PC-9 (cell line): ENCODE measurements at regions of chr11 and their contacts with region 1.

Region 1: GRCh38 chr11:46489661-46490560 is 98.3 kb upstream of the CHRM4 start:
- DNase-seq: peak in 1 of 2 experiments; percentile 23
- H3K4me3 ChIP-seq: no peak overlapping the region
- H3K27ac ChIP-seq: no peak overlapping the region
- H3K4me1 ChIP-seq: no peaks in the 10 kb centered on the region
- H3K27me3 ChIP-seq: no peaks in the 10 kb centered on the region
- CTCF ChIP-seq: peak; percentile 71

Region 2: GRCh38 chr11:45603946-45604682 is 885.8 kb before region 1 on chr11:
- CTCF ChIA-PET with region 1: interaction called, 17 read pairs
- POLR2A ChIA-PET with region 1: no interaction called
- intact Hi-C with region 1: no loop called
- DNase-seq: no peak
- H3K4me3 ChIP-seq: no peak overlapping the region
- H3K27ac ChIP-seq: no peak overlapping the region
- H3K4me1 ChIP-seq: no peaks in the 10 kb centered on the region
- H3K27me3 ChIP-seq: peaks cover 72% of the 10 kb centered on the region
- CTCF ChIP-seq: no peak

Region 3: DNA sequence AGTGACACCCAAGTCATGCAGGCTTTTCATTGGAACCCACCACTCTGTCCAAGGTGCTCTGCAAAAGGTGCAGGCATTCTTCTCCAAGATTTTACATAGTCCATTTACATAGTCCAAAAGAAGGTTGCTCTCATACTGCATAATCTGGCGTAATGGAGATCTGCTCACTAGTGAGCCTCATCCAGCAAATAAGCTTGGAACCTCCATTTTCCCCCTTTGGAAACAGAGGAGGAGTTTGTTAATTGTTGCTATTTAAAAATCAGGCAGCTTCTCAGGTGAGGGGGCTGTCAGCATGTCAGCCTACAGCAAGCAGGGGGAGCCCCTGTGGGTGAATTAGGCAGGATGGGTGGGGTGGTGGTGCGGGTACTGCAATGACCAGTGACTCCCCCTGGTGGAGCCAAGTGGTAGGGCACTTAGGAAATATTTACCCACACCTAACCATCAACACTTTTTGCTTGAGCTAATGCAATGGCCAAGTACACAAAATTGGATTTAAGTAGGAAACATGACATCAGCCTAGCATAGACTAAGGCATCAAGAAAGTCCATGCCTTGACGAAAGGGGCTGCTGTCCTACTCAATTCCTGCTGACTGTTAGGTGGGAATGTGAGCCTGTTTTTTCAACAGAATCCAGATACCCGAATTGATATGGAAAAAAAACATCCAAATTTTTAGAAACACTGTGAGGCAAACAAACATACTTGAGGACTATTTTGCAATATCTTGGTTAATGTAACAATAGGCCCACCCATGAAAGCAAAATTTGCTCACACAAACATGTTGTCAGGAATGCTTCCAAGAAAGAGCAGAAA is 39.4 kb after region 1 on chr11:
- CTCF ChIA-PET with region 1: interaction called, 9 read pairs
- POLR2A ChIA-PET with region 1: interaction called, 3 read pairs
- intact Hi-C with region 1: loop called (anchors 2 kb)
- DNase-seq: peak; percentile 43 to 63
- H3K4me3 ChIP-seq: no peak overlapping the region
- H3K27ac ChIP-seq: no peak overlapping the region
- H3K4me1 ChIP-seq: no peaks in the 10 kb centered on the region
- H3K27me3 ChIP-seq: no peaks in the 10 kb centered on the region
- CTCF ChIP-seq: peak; percentile 97

Region 4: DNA sequence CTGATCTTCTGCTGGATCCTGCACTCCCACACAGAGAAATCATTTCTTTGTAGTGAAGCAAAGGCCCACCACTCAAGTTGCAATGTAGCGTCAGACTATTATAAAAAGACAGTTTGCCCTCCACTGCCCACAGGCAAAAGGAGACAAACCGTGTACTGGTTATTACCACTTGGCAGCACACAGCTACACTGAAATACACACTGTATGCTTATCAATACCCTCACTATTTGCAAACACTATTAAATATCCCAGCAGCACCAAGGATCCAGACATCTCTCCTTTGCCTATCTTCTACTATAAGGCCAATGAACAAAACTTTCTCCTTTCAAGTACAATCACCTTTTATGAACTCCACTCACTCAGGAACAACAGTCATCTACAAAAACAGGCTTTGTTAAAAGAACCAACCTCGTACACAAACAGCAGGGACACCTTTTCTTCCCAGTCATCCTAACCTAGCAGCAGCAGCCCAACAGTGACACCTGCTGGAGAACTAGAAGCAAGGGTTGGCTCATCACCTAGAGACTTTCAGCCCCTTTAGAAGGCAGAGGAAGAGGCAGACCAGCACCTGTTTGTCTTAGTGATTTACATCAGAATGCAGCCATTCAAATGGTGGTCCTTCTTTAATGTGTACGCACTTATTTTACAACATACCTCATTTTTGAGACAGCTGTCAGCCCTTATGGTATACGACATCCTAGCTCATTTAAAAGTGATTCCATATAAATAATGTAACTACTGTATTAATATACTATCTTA is 47.8 kb after region 1 on chr11:
- CTCF ChIA-PET with region 1: no interaction called
- POLR2A ChIA-PET with region 1: interaction called, 3 read pairs
- intact Hi-C with region 1: loop called (anchors 1 kb)
- DNase-seq: peak; percentile 66 to 76
- H3K4me3 ChIP-seq: no peak overlapping the region
- H3K27ac ChIP-seq: 0 out of 2 replicates have a peak overlapping the region, but pooled peaks have one; percentile 5
- H3K4me1 ChIP-seq: peaks cover 8% of the 10 kb centered on the region; the same call in 1 of the 2 replicates
- H3K27me3 ChIP-seq: no peaks in the 10 kb centered on the region
- CTCF ChIP-seq: peak; percentile 97

Region 5: DNA sequence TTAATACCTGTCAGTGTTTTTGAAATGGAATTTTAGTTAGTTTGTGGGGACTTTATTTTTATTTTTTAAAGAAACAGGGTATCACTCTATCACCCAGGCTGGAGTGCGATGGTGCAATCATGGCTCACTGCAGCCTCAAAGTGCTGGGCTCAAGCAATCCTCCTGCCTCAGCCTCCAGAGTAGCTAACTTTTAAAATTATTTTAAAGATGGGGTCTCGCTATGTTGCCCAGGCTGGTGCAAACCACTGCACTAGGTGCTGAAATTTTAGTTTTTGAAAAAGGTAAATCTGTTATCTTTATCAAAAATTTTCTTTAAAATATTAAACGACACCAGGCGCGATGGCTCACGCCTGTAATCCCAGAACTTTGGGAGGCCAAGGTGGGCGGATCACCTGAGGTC is 61.4 kb after region 1 on chr11:
- CTCF ChIA-PET with region 1: no interaction called
- POLR2A ChIA-PET with region 1: no interaction called
- intact Hi-C with region 1: no loop called
- DNase-seq: no peak
- H3K4me3 ChIP-seq: no peak overlapping the region
- H3K27ac ChIP-seq: no peak overlapping the region
- H3K4me1 ChIP-seq: peaks cover 40% of the 10 kb centered on the region
- H3K27me3 ChIP-seq: no peaks in the 10 kb centered on the region
- CTCF ChIP-seq: no peak

Region 6: GRCh38 chr11:46633291-46634217 is 143.6 kb after region 1 on chr11:
- CTCF ChIA-PET with region 1: no interaction called
- POLR2A ChIA-PET with region 1: no interaction called
- intact Hi-C with region 1: no loop called
- DNase-seq: no peak
- H3K4me3 ChIP-seq: no peak overlapping the region
- H3K27ac ChIP-seq: no peak overlapping the region
- H3K4me1 ChIP-seq: no peaks in the 10 kb centered on the region
- H3K27me3 ChIP-seq: no peaks in the 10 kb centered on the region
- CTCF ChIP-seq: no peak

Region 7: DNA sequence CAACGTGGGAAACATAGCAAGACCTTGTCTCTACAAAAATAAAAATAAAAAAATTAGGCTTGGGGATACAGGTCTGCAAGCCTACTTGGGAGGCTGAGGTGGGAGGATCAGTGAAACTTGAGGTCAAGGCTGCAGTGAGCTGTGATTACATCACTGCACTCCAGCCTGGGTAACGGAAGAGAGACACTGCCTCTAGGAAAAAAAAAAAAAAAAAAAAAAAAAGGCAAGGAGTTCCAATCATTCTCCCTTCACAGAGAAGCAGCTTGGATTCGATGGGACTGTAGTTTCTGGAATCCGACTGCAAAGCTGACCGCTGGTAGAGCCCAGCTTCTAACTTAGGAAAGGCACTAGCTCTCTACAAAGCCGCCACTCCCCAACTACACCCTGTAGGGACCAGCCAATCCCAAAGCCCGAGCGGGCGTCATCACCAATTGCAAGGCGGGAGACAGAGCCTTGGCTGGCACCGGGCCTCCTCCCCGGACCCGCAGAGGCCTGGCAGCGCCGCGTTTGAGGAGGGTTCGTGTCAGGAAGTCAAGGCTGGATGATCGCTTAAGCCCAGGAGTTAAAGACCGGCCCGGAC is 724.2 kb after region 1 on chr11:
- CTCF ChIA-PET with region 1: no interaction called
- POLR2A ChIA-PET with region 1: no interaction called
- intact Hi-C with region 1: no loop called
- DNase-seq: peak; percentile 85 to 91
- H3K4me3 ChIP-seq: peak overlapping the region; percentile 70
- H3K27ac ChIP-seq: peak overlapping the region; percentile 49
- H3K4me1 ChIP-seq: peaks cover 29% of the 10 kb centered on the region
- H3K27me3 ChIP-seq: no peaks in the 10 kb centered on the region
- CTCF ChIP-seq: no peak